ENCODE measurements at regions of chr16 and their contacts with region 1.

Region 1: DNA sequence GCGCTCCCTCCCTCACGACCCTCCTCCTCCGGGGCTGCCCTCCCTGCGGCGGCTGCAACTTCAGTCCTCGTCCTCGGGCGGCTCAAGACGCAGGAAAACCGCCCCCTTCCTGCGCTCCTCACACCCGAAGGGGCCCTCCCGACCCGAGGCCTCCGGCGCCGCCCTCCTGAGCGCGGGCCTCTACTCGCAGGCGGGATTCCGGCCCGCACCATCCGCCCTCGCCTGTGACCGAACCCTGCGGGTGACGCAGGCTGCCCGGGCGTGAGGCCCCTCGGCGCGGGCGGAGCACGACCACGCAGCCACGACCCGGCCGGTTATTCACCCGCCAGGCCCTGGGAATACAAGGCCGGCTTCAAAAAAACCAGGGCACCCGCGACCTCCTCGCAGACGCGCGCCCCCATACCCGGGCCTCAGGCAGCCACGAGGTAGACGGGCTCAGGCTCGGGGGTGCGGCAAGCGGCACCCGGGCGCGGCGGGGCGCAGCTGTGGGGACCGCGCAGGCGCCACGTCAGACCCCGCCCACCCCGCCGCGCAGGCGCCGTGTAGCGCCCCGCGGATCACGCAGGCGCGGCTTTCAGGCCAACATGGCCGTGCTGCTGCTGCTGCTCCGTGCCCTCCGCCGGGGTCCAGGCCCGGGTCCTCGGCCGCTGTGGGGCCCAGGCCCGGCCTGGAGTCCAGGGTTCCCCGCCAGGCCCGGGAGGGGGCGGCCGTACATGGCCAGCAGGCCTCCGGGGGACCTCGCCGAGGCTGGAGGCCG is at the start of gene SPG7:
- DNase-seq: peak; percentile 98
- ATAC-seq: peak; percentile 79
- H3K4me3 Mint-ChIP-seq: peak within 1 kb of the TSS; percentile 94
- H3K27ac Mint-ChIP-seq: peak within 1 kb of the TSS; percentile 95
- H3K4me1 Mint-ChIP-seq: peaks cover 29% of the 10 kb centered on the region
- H3K27me3 Mint-ChIP-seq: no peaks in the 10 kb centered on the region
- total RNA-seq, gene SPG7: 112 to 113 TPM

Region 2: DNA sequence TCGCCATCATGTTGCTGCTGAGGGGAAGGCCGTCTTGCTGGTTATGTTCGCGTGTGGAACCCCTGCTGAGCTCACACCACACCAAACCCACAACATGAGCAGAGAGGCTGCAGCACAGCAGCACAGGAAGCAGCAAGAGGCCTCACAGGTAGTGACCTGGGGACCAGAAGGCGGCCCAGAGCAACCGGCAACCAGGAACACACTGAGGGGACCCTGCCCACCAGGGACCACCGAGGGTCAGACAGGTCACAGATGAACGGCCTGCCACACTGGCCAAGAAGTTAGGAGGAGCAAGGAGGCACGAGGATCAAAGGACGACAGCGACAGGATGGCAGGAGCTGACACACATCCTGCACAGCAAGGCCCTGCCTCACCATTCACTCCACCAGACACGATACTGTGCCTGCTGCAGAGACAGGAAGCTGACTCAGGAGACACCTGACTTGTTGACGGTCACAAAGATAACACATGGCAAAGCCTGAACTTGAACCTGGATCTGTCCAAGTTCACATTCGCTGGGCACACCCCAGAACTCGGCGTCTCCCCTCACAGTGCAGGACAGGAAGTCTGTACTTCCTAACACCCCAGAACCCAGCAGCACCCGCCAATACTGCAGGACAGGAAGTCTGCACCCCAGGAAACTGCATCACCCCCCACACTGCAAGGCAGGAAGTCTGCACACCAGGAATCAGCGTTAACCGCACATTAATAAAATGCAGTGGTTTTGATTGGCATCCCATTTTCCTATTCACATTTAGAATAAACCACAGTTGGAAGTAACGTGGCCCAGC is 192.0 kb before region 1 on chr16:
- POLR2A ChIA-PET with region 1: interaction called, 11 read pairs
- DNase-seq: peak; percentile 78
- ATAC-seq: peak; percentile 92
- H3K4me3 Mint-ChIP-seq: peak overlapping the region; percentile 76
- H3K27ac Mint-ChIP-seq: peak overlapping the region; percentile 99
- H3K4me1 Mint-ChIP-seq: peaks cover 75% of the 10 kb centered on the region
- H3K27me3 Mint-ChIP-seq: no peaks in the 10 kb centered on the region

Region 3: GRCh38 chr16:89395141-89395874 is 112.7 kb before region 1 on chr16:
- POLR2A ChIA-PET with region 1: no interaction called
- DNase-seq: no peak
- ATAC-seq: no peak
- H3K4me3 Mint-ChIP-seq: no peak overlapping the region
- H3K27ac Mint-ChIP-seq: no peak overlapping the region
- H3K4me1 Mint-ChIP-seq: peaks cover 23% of the 10 kb centered on the region
- H3K27me3 Mint-ChIP-seq: no peaks in the 10 kb centered on the region

Region 4: DNA sequence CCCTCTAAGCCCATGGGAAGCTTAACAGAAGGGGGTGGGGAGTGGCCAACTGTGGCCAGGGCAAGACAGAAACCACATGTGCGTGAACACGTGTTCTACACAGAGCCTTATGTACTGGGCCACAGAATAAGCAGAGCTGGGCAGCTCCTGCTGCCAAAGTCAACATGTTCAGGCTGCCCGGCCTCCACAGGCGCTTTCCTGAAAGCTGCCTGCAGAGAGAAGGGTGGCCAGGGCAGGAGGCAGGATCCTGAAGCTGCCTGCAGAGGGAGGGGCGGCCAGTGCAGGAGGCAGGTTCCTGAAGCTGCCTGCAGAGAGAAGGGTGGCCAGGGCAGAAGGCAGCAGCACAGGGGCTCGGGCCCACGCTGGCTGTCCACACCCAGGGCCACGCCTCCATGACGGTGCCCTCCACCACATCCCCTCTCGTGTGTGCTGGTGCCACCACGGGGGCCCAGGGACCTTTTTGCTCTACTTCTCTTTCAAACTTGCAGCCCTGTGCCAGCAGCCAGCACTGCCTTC is 97.2 kb before region 1 on chr16:
- POLR2A ChIA-PET with region 1: interaction called, 11 read pairs
- DNase-seq: peak; percentile 49
- ATAC-seq: peak; percentile 20
- H3K4me3 Mint-ChIP-seq: peak overlapping the region; percentile 61
- H3K27ac Mint-ChIP-seq: peak overlapping the region; percentile 79
- H3K4me1 Mint-ChIP-seq: peaks cover 69% of the 10 kb centered on the region
- H3K27me3 Mint-ChIP-seq: no peaks in the 10 kb centered on the region

Region 5: GRCh38 chr16:89473791-89474414 is 34.1 kb before region 1 on chr16:
- POLR2A ChIA-PET with region 1: no interaction called
- DNase-seq: no peak
- ATAC-seq: no peak
- H3K4me3 Mint-ChIP-seq: peak overlapping the region; percentile 43
- H3K27ac Mint-ChIP-seq: peak overlapping the region; percentile 27
- H3K4me1 Mint-ChIP-seq: peaks cover 62% of the 10 kb centered on the region
- H3K27me3 Mint-ChIP-seq: no peaks in the 10 kb centered on the region